ENCODE measurements at regions of chr12 and their contacts with region 1.

Region 1: DNA sequence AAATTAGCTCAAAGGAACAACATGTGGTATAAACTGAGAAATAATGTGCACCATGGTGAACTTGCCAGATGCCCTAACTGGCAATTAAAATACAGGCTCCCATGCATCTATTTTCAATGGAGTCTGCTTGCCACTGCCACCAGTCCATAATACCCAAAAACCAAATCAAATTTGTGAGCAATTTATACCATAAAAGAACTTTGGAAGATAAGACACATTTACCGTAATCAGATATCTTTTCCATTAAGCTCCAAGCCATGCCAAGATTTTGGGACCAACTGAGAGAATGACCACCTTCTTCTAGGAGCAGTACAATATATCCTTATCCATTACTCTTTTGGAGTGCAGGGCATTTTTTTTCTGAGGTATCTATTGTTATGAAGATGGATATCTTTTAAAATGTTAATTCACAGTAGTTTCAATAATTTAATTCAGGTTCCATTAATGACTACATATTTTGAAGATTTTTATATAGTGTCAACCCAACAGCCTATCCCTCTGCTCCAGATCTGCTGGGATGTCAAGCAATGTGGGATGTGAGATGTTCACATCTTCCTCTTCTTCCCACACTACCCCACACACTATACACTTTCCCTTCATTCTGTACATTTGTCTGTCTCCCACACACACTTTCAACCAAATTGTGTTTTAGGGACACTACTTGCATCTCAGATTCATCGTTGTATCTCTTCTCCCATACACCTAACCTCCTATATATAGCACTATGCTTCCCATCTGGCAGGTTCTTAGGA is 53.3 kb downstream of the KIF21A start:
- DNase-seq: no peak
- H3K4me3 ChIP-seq: no peak overlapping the region
- H3K4me3 Mint-ChIP-seq: no peak overlapping the region
- H3K27ac Mint-ChIP-seq: no peak overlapping the region
- H3K4me1 ChIP-seq: peaks cover 10% of the 10 kb centered on the region
- H3K4me1 Mint-ChIP-seq: peaks cover 20% of the 10 kb centered on the region
- H3K27me3 ChIP-seq: no peaks in the 10 kb centered on the region
- H3K27me3 Mint-ChIP-seq: no peaks in the 10 kb centered on the region
- CTCF ChIP-seq: no peak

Region 2: GRCh38 chr12:38906482-38907170 is 482.9 kb before region 1 on chr12:
- CTCF ChIA-PET with region 1: no interaction called
- POLR2A ChIA-PET with region 1: no interaction called
- intact Hi-C with region 1: no loop called
- DNase-seq: peak; percentile 88 to 94
- H3K4me3 ChIP-seq: peak overlapping the region; percentile 94
- H3K4me3 Mint-ChIP-seq: peak overlapping the region; percentile 98
- H3K27ac Mint-ChIP-seq: peak overlapping the region; percentile 93
- H3K4me1 ChIP-seq: 0 out of 2 replicates have a peak, but pooled peaks cover 4% of the 10 kb centered on the region
- H3K4me1 Mint-ChIP-seq: peaks cover 13% of the 10 kb centered on the region
- H3K27me3 ChIP-seq: no peaks in the 10 kb centered on the region
- H3K27me3 Mint-ChIP-seq: no peaks in the 10 kb centered on the region
- CTCF ChIP-seq: peak; percentile 82 to 98

Region 3: GRCh38 chr12:39205969-39206368 is 183.6 kb before region 1 on chr12:
- CTCF ChIA-PET with region 1: no interaction called
- POLR2A ChIA-PET with region 1: no interaction called
- intact Hi-C with region 1: no loop called
- DNase-seq: no peak
- H3K4me3 ChIP-seq: no peak overlapping the region
- H3K4me3 Mint-ChIP-seq: no peak overlapping the region
- H3K27ac Mint-ChIP-seq: no peak overlapping the region
- H3K4me1 ChIP-seq: no peaks in the 10 kb centered on the region
- H3K4me1 Mint-ChIP-seq: no peaks in the 10 kb centered on the region
- H3K27me3 ChIP-seq: no peaks in the 10 kb centered on the region
- H3K27me3 Mint-ChIP-seq: no peaks in the 10 kb centered on the region
- CTCF ChIP-seq: no peak

Region 4: GRCh38 chr12:39341179-39341578 is 48.4 kb before region 1 on chr12:
- CTCF ChIA-PET with region 1: no interaction called
- POLR2A ChIA-PET with region 1: no interaction called
- intact Hi-C with region 1: loop called (anchors 5 kb)
- DNase-seq: no peak
- H3K4me3 ChIP-seq: no peak overlapping the region
- H3K4me3 Mint-ChIP-seq: no peak overlapping the region
- H3K27ac Mint-ChIP-seq: no peak overlapping the region
- H3K4me1 ChIP-seq: no peaks in the 10 kb centered on the region
- H3K4me1 Mint-ChIP-seq: no peaks in the 10 kb centered on the region
- H3K27me3 ChIP-seq: no peaks in the 10 kb centered on the region
- H3K27me3 Mint-ChIP-seq: no peaks in the 10 kb centered on the region
- CTCF ChIP-seq: no peak

Region 5: GRCh38 chr12:39365364-39366001 is 24.1 kb before region 1 on chr12:
- CTCF ChIA-PET with region 1: no interaction called
- POLR2A ChIA-PET with region 1: no interaction called
- intact Hi-C with region 1: loop called (anchors 1 kb)
- DNase-seq: no peak
- H3K4me3 ChIP-seq: no peak overlapping the region
- H3K4me3 Mint-ChIP-seq: no peak overlapping the region
- H3K27ac Mint-ChIP-seq: no peak overlapping the region
- H3K4me1 ChIP-seq: peaks cover 22% of the 10 kb centered on the region
- H3K4me1 Mint-ChIP-seq: peaks cover 6% of the 10 kb centered on the region
- H3K27me3 ChIP-seq: no peaks in the 10 kb centered on the region
- H3K27me3 Mint-ChIP-seq: no peaks in the 10 kb centered on the region
- CTCF ChIP-seq: no peak

Region 6: DNA sequence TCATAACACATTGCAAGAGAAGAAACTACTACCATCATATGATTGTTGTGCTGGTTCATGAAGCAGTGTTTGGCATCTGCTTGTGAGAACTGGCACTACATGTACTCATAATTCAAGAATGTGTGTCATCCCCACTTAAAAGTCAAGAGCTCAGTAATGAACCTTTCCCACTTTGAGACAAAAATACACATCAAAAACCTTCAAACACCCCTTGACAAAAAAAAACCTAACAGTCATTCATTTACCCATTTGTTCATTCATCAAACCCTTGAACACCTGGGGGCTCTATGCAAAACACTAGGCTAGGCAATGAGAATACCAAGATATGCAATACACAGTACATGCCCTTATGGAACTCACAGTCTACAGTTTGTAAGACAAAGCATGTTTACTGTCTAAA is 13.3 kb after region 1 on chr12:
- CTCF ChIA-PET with region 1: no interaction called
- POLR2A ChIA-PET with region 1: no interaction called
- intact Hi-C with region 1: no loop called
- DNase-seq: no peak
- H3K4me3 ChIP-seq: no peak overlapping the region
- H3K4me3 Mint-ChIP-seq: no peak overlapping the region
- H3K27ac Mint-ChIP-seq: no peak overlapping the region
- H3K4me1 ChIP-seq: no peaks in the 10 kb centered on the region
- H3K4me1 Mint-ChIP-seq: peaks cover 8% of the 10 kb centered on the region
- H3K27me3 ChIP-seq: no peaks in the 10 kb centered on the region
- H3K27me3 Mint-ChIP-seq: no peaks in the 10 kb centered on the region
- CTCF ChIP-seq: no peak

Region 7: DNA sequence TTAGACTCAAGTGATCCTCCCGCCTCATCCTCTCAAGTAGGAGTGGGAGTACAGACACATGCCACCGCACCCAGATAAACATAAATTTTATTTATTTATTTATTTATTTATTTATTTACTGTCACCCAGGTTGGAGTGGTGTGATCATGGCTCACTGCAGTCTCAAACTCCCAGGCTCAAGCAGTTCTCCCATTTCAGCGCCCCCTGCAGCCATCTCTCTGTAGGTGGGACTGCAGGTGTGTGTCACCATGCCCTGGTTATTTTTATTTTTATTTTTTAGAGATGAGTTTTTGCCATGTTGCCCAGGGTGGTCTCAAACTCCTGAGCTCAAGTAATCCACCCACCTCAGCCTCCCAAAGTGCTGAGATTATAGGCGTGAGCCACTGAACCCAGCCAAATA is 86.5 kb after region 1 on chr12:
- CTCF ChIA-PET with region 1: no interaction called
- POLR2A ChIA-PET with region 1: no interaction called
- intact Hi-C with region 1: no loop called
- DNase-seq: no peak
- H3K4me3 ChIP-seq: no peak overlapping the region
- H3K4me3 Mint-ChIP-seq: no peak overlapping the region
- H3K27ac Mint-ChIP-seq: no peak overlapping the region
- H3K4me1 ChIP-seq: no peaks in the 10 kb centered on the region; the same call in 1 of the 2 replicates
- H3K4me1 Mint-ChIP-seq: peaks cover 7% of the 10 kb centered on the region
- H3K27me3 ChIP-seq: no peaks in the 10 kb centered on the region
- H3K27me3 Mint-ChIP-seq: peaks cover 3% of the 10 kb centered on the region
- CTCF ChIP-seq: no peak

Measured in Caco-2 (cell line).